Naive thymus-derived CD4-positive, alpha-beta T cell (primary cell): ENCODE measurements at regions of chr7 and their contacts with region 1.

Region 1: GRCh38 chr7:91034459-91035368 is 229.5 kb upstream of the FZD1 start:
- DNase-seq: peak in 2 of 9 donors; percentile 9
- ATAC-seq: no peak
- H3K4me3 ChIP-seq: no peak overlapping the region
- H3K4me3 Mint-ChIP-seq: no peak overlapping the region
- H3K27ac ChIP-seq: no peak overlapping the region
- H3K27ac Mint-ChIP-seq: no peak overlapping the region
- H3K4me1 ChIP-seq: no peaks in the 10 kb centered on the region
- H3K4me1 Mint-ChIP-seq: no peaks in the 10 kb centered on the region
- H3K27me3 ChIP-seq: no peaks in the 10 kb centered on the region
- H3K27me3 Mint-ChIP-seq: peaks cover 0 to 4% (median 0%) of the 10 kb centered on the region in 5 donors

Region 2: GRCh38 chr7:90424720-90425119 is 610.0 kb before region 1 on chr7:
- CTCF ChIA-PET with region 1: no interaction called
- POLR2A ChIA-PET with region 1: no interaction called
- intact Hi-C with region 1: no loop called
- DNase-seq: no peak
- ATAC-seq: no peak
- H3K4me3 ChIP-seq: no peak overlapping the region
- H3K4me3 Mint-ChIP-seq: peak overlapping the region in 1 of 10 donors; percentile 23
- H3K27ac ChIP-seq: no peak overlapping the region
- H3K27ac Mint-ChIP-seq: peak overlapping the region in 2 of 9 donors; percentile 26 to 60
- H3K4me1 ChIP-seq: no peaks in the 10 kb centered on the region
- H3K4me1 Mint-ChIP-seq: peaks cover 0 to 16% (median 0%) of the 10 kb centered on the region in 7 donors
- H3K27me3 ChIP-seq: no peaks in the 10 kb centered on the region
- H3K27me3 Mint-ChIP-seq: peaks cover 0 to 11% (median 7%) of the 10 kb centered on the region in 5 donors

Region 3: DNA sequence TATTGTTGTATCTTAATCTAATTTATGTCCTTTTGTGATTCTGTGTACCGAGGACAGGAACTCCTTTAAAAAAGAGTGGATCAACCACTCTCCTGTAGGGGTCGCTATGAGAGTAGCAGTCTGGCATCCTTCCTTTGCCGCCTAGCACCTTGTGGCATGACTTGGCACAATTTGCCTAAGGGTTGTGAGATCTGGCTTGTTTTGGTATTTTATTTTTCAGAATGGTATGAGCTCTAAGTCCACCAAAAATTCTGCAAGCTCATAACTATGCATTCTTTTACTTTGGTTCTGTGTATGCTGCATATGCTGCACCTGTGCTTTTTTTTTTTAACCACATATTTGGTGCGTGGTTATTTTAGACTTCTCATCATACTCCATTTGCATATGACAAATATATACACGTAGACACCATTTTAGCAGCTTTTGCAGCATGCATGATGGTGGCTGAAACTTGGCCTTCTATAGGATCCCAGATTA is 325.8 kb before region 1 on chr7:
- CTCF ChIA-PET with region 1: no interaction called
- POLR2A ChIA-PET with region 1: no interaction called
- intact Hi-C with region 1: loop called (anchors 5 to 10 kb)
- DNase-seq: peak in 1 of 9 donors; percentile 7
- ATAC-seq: peak; percentile 50
- H3K4me3 ChIP-seq: no peak overlapping the region
- H3K4me3 Mint-ChIP-seq: no peak overlapping the region
- H3K27ac ChIP-seq: no peak overlapping the region
- H3K27ac Mint-ChIP-seq: no peak overlapping the region
- H3K4me1 ChIP-seq: no peaks in the 10 kb centered on the region
- H3K4me1 Mint-ChIP-seq: peaks cover 0 to 2% (median 0%) of the 10 kb centered on the region in 7 donors
- H3K27me3 ChIP-seq: no peaks in the 10 kb centered on the region
- H3K27me3 Mint-ChIP-seq: peaks cover 0 to 5% (median 2%) of the 10 kb centered on the region in 5 donors